Mucosa of descending colon (tissue), 3 donors: ENCODE measurements at regions of chr22 and their contacts with region 1.

Region 1: DNA sequence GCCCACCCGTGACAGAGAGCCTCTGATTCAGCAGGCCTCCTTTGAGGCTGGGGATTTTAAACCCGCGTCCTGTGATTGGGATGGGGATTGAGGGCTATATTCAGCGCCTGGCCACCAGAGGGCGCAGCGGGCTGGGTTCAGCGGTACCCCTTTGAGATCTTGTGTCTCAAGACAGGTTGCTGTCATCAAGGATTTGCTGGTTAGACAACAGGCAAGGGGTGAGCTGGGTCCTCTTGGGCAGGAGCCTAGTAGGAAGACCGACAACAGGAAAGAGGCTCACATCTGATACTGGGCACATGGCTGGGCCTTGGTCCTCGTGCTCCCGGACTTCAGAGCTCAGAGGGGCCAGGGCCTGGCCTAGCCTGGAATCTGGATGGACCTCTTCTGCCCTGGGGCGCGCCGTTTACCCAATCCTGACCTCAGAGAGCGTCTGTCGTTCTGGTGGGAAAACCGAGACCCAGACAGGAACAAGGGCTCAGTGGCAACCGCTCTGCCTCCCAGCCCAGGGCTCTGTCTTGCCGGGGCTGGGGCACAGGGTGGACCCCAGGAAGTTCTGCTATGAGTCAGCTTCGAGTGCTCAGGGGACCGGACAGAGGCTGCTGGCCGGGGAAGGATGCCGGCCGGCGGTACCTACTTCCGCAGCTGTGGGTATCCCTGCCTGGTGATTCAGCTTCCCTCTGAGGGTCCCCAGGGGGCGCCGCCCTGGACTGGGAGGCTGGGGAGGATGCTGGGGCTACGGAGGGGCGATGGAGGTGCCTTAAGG is 929 bp upstream of the SLC35E4 start:
- DNase-seq: peak; percentile 90 to 92 (median 92)
- ATAC-seq: peak; percentile 78
- H3K4me3 ChIP-seq: no peak overlapping the region
- H3K4me1 ChIP-seq: peaks cover 25% of the 10 kb centered on the region
- CTCF ChIP-seq: peak; percentile 84

Region 2: DNA sequence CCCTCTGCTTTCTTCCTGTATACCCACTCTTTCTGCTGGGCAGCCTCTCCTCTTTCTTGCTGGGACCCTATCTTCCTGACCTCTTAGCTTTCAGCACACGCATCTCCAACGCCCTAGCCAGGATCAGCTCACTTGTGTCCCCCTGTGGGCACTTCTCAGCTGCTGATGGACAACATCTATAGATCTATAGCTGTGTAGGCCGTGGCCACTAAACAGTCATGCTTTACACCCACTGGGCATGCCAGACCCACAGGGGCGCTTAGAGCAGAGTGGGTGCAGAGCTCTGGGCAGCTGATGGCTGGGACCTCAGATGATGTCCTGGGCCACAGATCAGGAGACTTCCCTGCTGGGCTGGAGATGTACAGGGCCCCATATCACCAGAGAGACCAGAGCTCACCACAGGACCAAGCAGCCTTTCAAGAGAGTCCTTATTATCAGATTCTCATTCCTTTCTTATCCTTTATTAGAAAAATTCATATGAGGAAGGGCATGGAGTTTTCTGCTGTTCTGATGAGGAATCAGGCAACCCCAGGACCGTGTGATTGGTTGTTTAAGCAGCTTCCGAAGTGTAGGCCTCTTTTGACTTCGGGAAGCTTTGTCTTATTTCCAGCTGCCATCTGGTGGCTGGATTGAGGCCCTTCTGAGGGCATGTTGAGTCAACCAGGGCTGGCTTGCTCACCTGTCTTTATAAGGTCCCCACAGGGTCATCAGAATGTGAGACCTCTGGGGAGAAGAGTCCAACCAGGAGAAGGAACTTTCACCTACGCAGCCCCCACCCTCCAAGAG is 120.5 kb after region 1 on chr22:
- intact Hi-C with region 1: loop called (anchors 1 to 5 kb)
- DNase-seq: peak in 2 of 3 donors; percentile 66 to 81
- ATAC-seq: peak; percentile 89
- H3K4me3 ChIP-seq: no peak overlapping the region
- H3K4me1 ChIP-seq: no peaks in the 10 kb centered on the region
- CTCF ChIP-seq: peak; percentile 19